H1 (cell line): ENCODE measurements at regions of chr1 and their contacts with region 1.

Region 1: GRCh38 chr1:45686317-45687013 is at the start of gene GPBP1L1:
- DNase-seq: peak; percentile 93 to 98
- H3K4me3 ChIP-seq: peak within 1 kb of the TSS; percentile 96 to 99 (median 98)
- H3K27ac ChIP-seq: peak within 1 kb of the TSS; percentile 93
- H3K4me1 ChIP-seq: peaks cover 0 to 5% (median under 1%) of the 10 kb centered on the region in 4 experiments; a peak in 5 of 7 replicates
- H3K27me3 ChIP-seq: no peaks in the 10 kb centered on the region
- CTCF ChIP-seq: no peak
- EP300 ChIP-seq: no peak
- POLR2A ChIP-seq: peak; percentile 59 to 97
- RAD21 ChIP-seq: no peak
- total RNA-seq, gene GPBP1L1: 119 and 126 TPM in 2 replicates

Region 2: DNA sequence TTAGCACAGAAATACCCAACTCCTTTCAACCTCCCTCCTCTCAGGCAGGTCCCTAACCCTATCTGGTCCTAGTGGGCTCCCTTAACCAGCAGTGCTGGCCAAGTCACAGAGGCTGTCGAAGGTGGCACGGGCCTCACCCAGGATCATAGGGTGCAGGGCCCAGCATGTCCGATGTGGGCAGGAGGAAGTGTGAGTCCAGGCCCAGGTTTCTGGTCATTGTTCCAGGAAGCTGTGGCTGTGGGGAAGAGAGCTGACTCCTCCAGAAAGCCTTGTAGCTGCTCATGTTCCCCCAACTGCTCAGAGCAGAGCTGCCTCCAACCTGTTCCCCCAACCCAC is 65.0 kb before region 1 on chr1:
- CTCF ChIA-PET with region 1: no interaction called
- POLR2A ChIA-PET with region 1: interaction called, 11 read pairs
- DNase-seq: no peak
- H3K4me3 ChIP-seq: no peak overlapping the region
- H3K27ac ChIP-seq: no peak overlapping the region
- H3K4me1 ChIP-seq: no peaks in the 10 kb centered on the region; a peak in 1 of 7 replicates
- H3K27me3 ChIP-seq: no peaks in the 10 kb centered on the region
- CTCF ChIP-seq: no peak
- EP300 ChIP-seq: no peak
- POLR2A ChIP-seq: peak in 1 of 2 experiments; percentile 3; a peak in 1 of 3 replicates
- RAD21 ChIP-seq: no peak

Region 3: GRCh38 chr1:45673956-45674355 is 12.5 kb before region 1 on chr1:
- CTCF ChIA-PET with region 1: interaction called, 3 read pairs
- POLR2A ChIA-PET with region 1: interaction called, 17 read pairs
- DNase-seq: no peak
- H3K4me3 ChIP-seq: no peak overlapping the region
- H3K27ac ChIP-seq: no peak overlapping the region
- H3K4me1 ChIP-seq: peaks cover 0 to 6% (median 0%) of the 10 kb centered on the region in 4 experiments; a peak in 2 of 7 replicates
- H3K27me3 ChIP-seq: no peaks in the 10 kb centered on the region
- CTCF ChIP-seq: no peak
- EP300 ChIP-seq: no peak
- POLR2A ChIP-seq: no peak
- RAD21 ChIP-seq: no peak